Left colon (tissue), 2 donors: ENCODE measurements at regions of chr18 and their contacts with region 1.

Region 1: GRCh38 chr18:54679318-54680149 is 88.5 kb downstream of the DYNAP start:
- DNase-seq: no peak
- ATAC-seq: peak; percentile 83

Region 2: DNA sequence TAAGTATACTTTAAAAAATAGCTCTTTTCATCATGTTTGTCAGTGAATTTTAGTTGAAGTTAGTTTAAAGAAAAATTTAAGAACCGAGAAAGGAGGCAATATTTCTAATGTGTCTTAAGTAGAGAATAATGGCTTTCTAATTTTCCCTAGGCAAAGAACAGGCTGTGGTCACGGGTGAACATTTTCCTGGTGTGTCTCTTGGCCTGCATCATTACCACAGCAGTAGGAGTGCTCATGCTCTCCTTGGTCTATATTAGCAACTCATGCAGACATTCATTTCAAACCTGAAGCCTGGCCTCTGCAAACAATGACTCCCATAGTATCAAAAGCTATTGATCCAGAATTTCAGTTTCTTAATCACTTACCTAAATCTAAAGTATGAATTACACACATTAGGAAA is 264.4 kb before region 1 on chr18:
- intact Hi-C with region 1: no loop called
- DNase-seq: no peak
- ATAC-seq: no peak

Region 3: DNA sequence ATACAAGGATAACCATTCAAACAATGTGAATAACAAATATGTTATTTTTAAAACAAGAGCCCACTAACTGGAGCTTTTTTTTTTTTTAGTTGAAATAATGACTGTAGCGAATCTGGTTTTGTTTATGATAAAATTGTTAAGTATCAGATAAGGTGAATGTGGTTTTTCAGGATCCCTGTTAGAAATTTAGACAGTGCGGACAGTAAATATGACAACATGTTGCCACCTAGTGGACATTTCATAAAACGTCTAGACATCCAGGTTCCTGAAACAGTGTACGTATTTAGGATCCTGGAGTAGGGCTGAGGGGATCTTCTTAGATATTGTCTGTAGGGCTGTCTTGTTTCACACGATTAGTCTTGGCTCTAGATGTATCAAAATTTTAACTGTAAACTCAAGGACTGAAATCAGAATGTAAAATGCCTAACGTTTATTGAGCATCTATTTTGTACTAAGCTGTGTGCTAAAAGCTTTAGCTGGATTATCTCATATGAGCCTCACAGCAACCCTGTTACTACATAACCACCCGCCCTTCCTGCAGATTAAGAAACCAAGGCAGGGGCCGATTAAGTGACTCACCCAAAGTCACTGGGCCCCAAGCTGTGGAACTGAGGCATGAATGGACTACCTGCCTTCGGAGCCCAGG is 303.6 kb after region 1 on chr18:
- intact Hi-C with region 1: loop called in 1 of 2 experiments (anchors 5 kb)
- DNase-seq: no peak
- ATAC-seq: peak; percentile 78